ENCODE measurements at regions of chr4 and their contacts with region 1.

Region 1: DNA sequence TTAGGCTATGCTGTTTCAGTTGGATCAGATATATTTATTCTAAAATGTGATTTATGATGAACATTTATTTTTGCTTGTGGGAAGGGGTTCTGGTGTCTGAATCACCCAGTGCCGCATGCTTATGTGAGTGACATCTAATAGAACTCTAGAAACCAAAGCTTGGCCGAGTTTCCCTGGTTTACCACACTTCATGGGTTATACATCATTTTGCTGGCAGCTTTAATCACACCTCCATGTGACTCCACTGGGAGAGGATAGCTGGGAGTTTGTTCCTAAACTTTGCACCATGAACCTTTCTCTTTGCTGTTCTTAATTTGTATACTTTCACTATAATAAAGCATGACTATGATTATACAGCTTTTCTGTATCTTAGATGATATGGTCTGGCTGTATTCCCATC is 382.9 kb downstream of the INPP4B start:
- DNase-seq: no peak
- ATAC-seq: no peak
- H3K4me3 ChIP-seq: no peak overlapping the region
- H3K27ac ChIP-seq: no peak overlapping the region
- H3K4me1 ChIP-seq: no peaks in the 10 kb centered on the region
- H3K27me3 ChIP-seq: no peaks in the 10 kb centered on the region
- CTCF ChIP-seq: no peak
- EP300 ChIP-seq: no peak
- POLR2A ChIP-seq: no peak
- RAD21 ChIP-seq: no peak

Region 2: GRCh38 chr4:141884070-141884469 is 579.1 kb before region 1 on chr4:
- CTCF ChIA-PET with region 1: no interaction called
- POLR2A ChIA-PET with region 1: no interaction called
- RAD21 ChIA-PET with region 1: no interaction called
- SMC1A ChIA-PET with region 1: no interaction called
- in situ Hi-C with region 1: no loop called
- intact Hi-C with region 1: no loop called
- DNase-seq: no peak
- ATAC-seq: no peak
- H3K4me3 ChIP-seq: no peak overlapping the region
- H3K27ac ChIP-seq: no peak overlapping the region
- H3K4me1 ChIP-seq: no peaks in the 10 kb centered on the region
- H3K27me3 ChIP-seq: no peaks in the 10 kb centered on the region
- CTCF ChIP-seq: no peak
- EP300 ChIP-seq: no peak
- POLR2A ChIP-seq: no peak
- RAD21 ChIP-seq: no peak

Region 3: DNA sequence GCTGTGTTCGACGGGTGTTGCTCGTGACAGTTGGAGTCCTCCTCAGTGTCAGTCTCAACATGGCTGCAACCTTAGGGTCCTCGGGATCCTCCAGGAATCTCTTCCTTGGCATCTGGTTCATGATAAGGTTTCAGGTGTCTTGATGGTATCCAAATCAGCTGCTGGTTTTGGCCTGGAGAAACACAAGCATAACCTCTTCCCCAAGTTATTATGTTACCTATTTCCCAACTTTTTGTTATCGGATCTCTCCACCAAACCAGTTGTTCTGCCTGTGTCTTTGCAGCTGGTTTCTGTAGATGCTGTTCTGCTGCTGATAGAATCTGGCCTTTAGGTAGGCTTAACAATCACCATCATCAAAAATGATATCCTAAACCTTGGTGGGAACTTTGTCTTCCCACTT is 523.8 kb before region 1 on chr4:
- CTCF ChIA-PET with region 1: no interaction called
- POLR2A ChIA-PET with region 1: no interaction called
- RAD21 ChIA-PET with region 1: no interaction called
- SMC1A ChIA-PET with region 1: no interaction called
- in situ Hi-C with region 1: no loop called
- intact Hi-C with region 1: no loop called
- DNase-seq: no peak
- ATAC-seq: no peak
- H3K4me3 ChIP-seq: no peak overlapping the region
- H3K27ac ChIP-seq: no peak overlapping the region
- H3K4me1 ChIP-seq: no peaks in the 10 kb centered on the region
- H3K27me3 ChIP-seq: no peaks in the 10 kb centered on the region
- CTCF ChIP-seq: no peak
- EP300 ChIP-seq: no peak
- POLR2A ChIP-seq: no peak
- RAD21 ChIP-seq: no peak

Region 4: GRCh38 chr4:142452161-142452855 is 10.9 kb before region 1 on chr4:
- CTCF ChIA-PET with region 1: interaction called, 3 read pairs
- POLR2A ChIA-PET with region 1: no interaction called
- RAD21 ChIA-PET with region 1: no interaction called
- SMC1A ChIA-PET with region 1: interaction called, 11 read pairs
- in situ Hi-C with region 1: no loop called
- intact Hi-C with region 1: no loop called
- DNase-seq: no peak
- ATAC-seq: peak; percentile 40
- H3K4me3 ChIP-seq: no peak overlapping the region
- H3K27ac ChIP-seq: no peak overlapping the region
- H3K4me1 ChIP-seq: no peaks in the 10 kb centered on the region
- H3K27me3 ChIP-seq: no peaks in the 10 kb centered on the region
- CTCF ChIP-seq: no peak
- EP300 ChIP-seq: no peak
- POLR2A ChIP-seq: no peak
- RAD21 ChIP-seq: no peak

Region 5: GRCh38 chr4:142474335-142475087 is 11.3 kb after region 1 on chr4:
- CTCF ChIA-PET with region 1: interaction called, 3 read pairs
- POLR2A ChIA-PET with region 1: no interaction called
- RAD21 ChIA-PET with region 1: no interaction called
- SMC1A ChIA-PET with region 1: interaction called, 17 read pairs
- in situ Hi-C with region 1: no loop called
- intact Hi-C with region 1: no loop called
- DNase-seq: no peak
- ATAC-seq: peak; percentile 64
- H3K4me3 ChIP-seq: no peak overlapping the region
- H3K27ac ChIP-seq: no peak overlapping the region
- H3K4me1 ChIP-seq: no peaks in the 10 kb centered on the region
- H3K27me3 ChIP-seq: no peaks in the 10 kb centered on the region
- CTCF ChIP-seq: no peak
- EP300 ChIP-seq: no peak
- POLR2A ChIP-seq: no peak
- RAD21 ChIP-seq: no peak

Region 6: GRCh38 chr4:142480244-142480643 is 17.0 kb after region 1 on chr4:
- CTCF ChIA-PET with region 1: interaction called, 3 read pairs
- POLR2A ChIA-PET with region 1: no interaction called
- RAD21 ChIA-PET with region 1: no interaction called
- SMC1A ChIA-PET with region 1: interaction called, 17 read pairs
- in situ Hi-C with region 1: no loop called
- intact Hi-C with region 1: no loop called
- DNase-seq: no peak
- ATAC-seq: no peak
- H3K4me3 ChIP-seq: no peak overlapping the region
- H3K27ac ChIP-seq: no peak overlapping the region
- H3K4me1 ChIP-seq: no peaks in the 10 kb centered on the region
- H3K27me3 ChIP-seq: no peaks in the 10 kb centered on the region
- CTCF ChIP-seq: no peak
- EP300 ChIP-seq: no peak
- POLR2A ChIP-seq: no peak
- RAD21 ChIP-seq: no peak

Region 7: DNA sequence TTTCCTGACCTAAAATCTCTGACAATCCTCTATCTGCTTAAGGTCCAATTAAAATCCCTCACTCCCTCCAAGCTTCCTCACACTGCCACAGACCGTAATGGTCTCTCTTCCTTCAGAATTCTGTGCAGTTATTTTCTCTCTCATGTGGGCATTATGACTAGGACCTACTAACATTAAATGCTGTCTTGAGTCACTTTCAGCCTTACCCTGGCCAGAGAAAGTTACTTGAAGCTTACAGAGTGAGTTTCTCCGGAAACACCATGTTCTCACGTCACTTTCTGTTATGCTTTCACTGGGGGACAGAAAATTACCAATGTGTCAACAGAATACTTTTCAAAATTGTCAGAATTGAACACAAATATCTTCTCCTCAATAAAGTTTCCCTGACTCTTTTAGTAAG is 111.1 kb after region 1 on chr4:
- CTCF ChIA-PET with region 1: no interaction called
- POLR2A ChIA-PET with region 1: no interaction called
- RAD21 ChIA-PET with region 1: no interaction called
- SMC1A ChIA-PET with region 1: no interaction called
- in situ Hi-C with region 1: no loop called
- intact Hi-C with region 1: no loop called
- DNase-seq: no peak
- ATAC-seq: peak; percentile 80
- H3K4me3 ChIP-seq: no peak overlapping the region
- H3K27ac ChIP-seq: no peak overlapping the region
- H3K4me1 ChIP-seq: no peaks in the 10 kb centered on the region
- H3K27me3 ChIP-seq: no peaks in the 10 kb centered on the region
- CTCF ChIP-seq: no peak
- EP300 ChIP-seq: no peak
- POLR2A ChIP-seq: no peak
- RAD21 ChIP-seq: no peak